CD4-positive, alpha-beta T cell (primary cell): ENCODE measurements at regions of chr1 and their contacts with region 1.

Region 1: GRCh38 chr1:222634180-222635013 is 16.5 kb downstream of the MIA3 start:
- DNase-seq: peak in 12 of 14 experiments; percentile 21 to 89 (median 60)
- ATAC-seq: peak; percentile 98
- H3K4me3 ChIP-seq: no peak overlapping the region
- H3K4me3 Mint-ChIP-seq: no peak overlapping the region
- H3K27ac ChIP-seq: no peak overlapping the region
- H3K27ac Mint-ChIP-seq: peak overlapping the region; percentile 1
- H3K4me1 ChIP-seq: no peaks in the 10 kb centered on the region
- H3K4me1 Mint-ChIP-seq: peaks cover 11% of the 10 kb centered on the region
- H3K27me3 ChIP-seq: no peaks in the 10 kb centered on the region
- H3K27me3 Mint-ChIP-seq: no peaks in the 10 kb centered on the region
- CTCF ChIP-seq: peak; percentile 92

Region 2: GRCh38 chr1:222095606-222096475 is 538.6 kb before region 1 on chr1:
- CTCF ChIA-PET with region 1: no interaction called
- POLR2A ChIA-PET with region 1: no interaction called
- intact Hi-C with region 1: loop called in 1 of 2 experiments (anchors 5 kb)
- DNase-seq: peak; percentile 36 to 79 (median 56)
- ATAC-seq: peak; percentile 65
- H3K4me3 ChIP-seq: no peak overlapping the region
- H3K4me3 Mint-ChIP-seq: no peak overlapping the region
- H3K27ac ChIP-seq: no peak overlapping the region
- H3K27ac Mint-ChIP-seq: no peak overlapping the region
- H3K4me1 ChIP-seq: peaks cover 3% of the 10 kb centered on the region
- H3K4me1 Mint-ChIP-seq: no peaks in the 10 kb centered on the region
- H3K27me3 ChIP-seq: no peaks in the 10 kb centered on the region
- H3K27me3 Mint-ChIP-seq: no peaks in the 10 kb centered on the region
- CTCF ChIP-seq: peak; percentile 86

Region 3: GRCh38 chr1:222465211-222466041 is 169.0 kb before region 1 on chr1:
- CTCF ChIA-PET with region 1: interaction called, 9 read pairs
- POLR2A ChIA-PET with region 1: interaction called, 11 read pairs
- intact Hi-C with region 1: loop called (anchors 1 kb)
- DNase-seq: peak; percentile 49 to 89 (median 72)
- ATAC-seq: peak; percentile 91
- H3K4me3 ChIP-seq: peak overlapping the region; percentile 69
- H3K4me3 Mint-ChIP-seq: peak overlapping the region; percentile 94
- H3K27ac ChIP-seq: peak overlapping the region; percentile 25 to 34
- H3K27ac Mint-ChIP-seq: peak overlapping the region; percentile 93
- H3K4me1 ChIP-seq: peaks cover 10% of the 10 kb centered on the region
- H3K4me1 Mint-ChIP-seq: peaks cover 19% of the 10 kb centered on the region
- H3K27me3 ChIP-seq: no peaks in the 10 kb centered on the region
- H3K27me3 Mint-ChIP-seq: peaks cover 5% of the 10 kb centered on the region
- CTCF ChIP-seq: peak; percentile 100

Region 4: GRCh38 chr1:222589462-222590302 is 44.7 kb before region 1 on chr1 and contains the start of gene TAF1A:
- CTCF ChIA-PET with region 1: interaction called, 9 read pairs
- POLR2A ChIA-PET with region 1: interaction called, 9 read pairs
- intact Hi-C with region 1: loop called in 1 of 2 experiments (anchors 5 kb)
- DNase-seq: peak; percentile 74 to 93 (median 82)
- ATAC-seq: peak; percentile 99
- H3K4me3 ChIP-seq: peak within 1 kb of the TSS; percentile 74
- H3K4me3 Mint-ChIP-seq: peak within 1 kb of the TSS; percentile 97
- H3K27ac ChIP-seq: peak within 1 kb of the TSS; percentile 67 to 76
- H3K27ac Mint-ChIP-seq: peak within 1 kb of the TSS; percentile 99
- H3K4me1 ChIP-seq: peaks cover 14% of the 10 kb centered on the region
- H3K4me1 Mint-ChIP-seq: peaks cover 55% of the 10 kb centered on the region
- H3K27me3 ChIP-seq: no peaks in the 10 kb centered on the region
- H3K27me3 Mint-ChIP-seq: no peaks in the 10 kb centered on the region
- CTCF ChIP-seq: no peak
- total RNA-seq, gene TAF1A: 3.3 to 4.1 TPM

Region 5: GRCh38 chr1:222617367-222617951 is 16.9 kb before region 1 on chr1:
- CTCF ChIA-PET with region 1: interaction called, 10 read pairs
- POLR2A ChIA-PET with region 1: interaction called, 5 read pairs
- intact Hi-C with region 1: loop called in 1 of 2 experiments (anchors 2 kb)
- DNase-seq: peak; percentile 85 to 99 (median 90)
- ATAC-seq: peak; percentile 90
- H3K4me3 ChIP-seq: peak overlapping the region; percentile 69
- H3K4me3 Mint-ChIP-seq: peak overlapping the region; percentile 94
- H3K27ac ChIP-seq: peak overlapping the region; percentile 43 to 80
- H3K27ac Mint-ChIP-seq: peak overlapping the region; percentile 92
- H3K4me1 ChIP-seq: peaks cover 18% of the 10 kb centered on the region
- H3K4me1 Mint-ChIP-seq: peaks cover 40% of the 10 kb centered on the region
- H3K27me3 ChIP-seq: peaks cover 0 to 6% of the 10 kb centered on the region in 2 experiments
- H3K27me3 Mint-ChIP-seq: peaks cover 34% of the 10 kb centered on the region
- CTCF ChIP-seq: no peak

Region 6: DNA sequence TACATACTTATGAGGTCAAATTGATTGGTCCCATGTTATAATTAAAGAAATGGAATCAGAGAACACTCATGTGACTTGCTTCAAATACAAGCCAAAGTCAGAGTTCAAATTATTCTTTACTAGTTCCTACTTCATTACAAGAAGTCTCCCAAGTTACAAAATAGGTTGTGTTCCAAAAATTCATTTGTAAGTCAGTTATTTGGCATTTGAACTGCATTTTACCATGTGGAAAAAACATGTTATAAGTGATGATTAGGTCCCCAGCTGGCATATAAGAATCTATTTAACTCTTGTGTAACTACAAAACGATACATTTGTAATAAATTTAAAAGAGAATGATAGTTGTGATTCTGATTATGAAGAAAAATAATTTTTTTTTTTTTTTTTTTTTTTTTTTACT is 304.6 kb after region 1 on chr1:
- CTCF ChIA-PET with region 1: no interaction called
- POLR2A ChIA-PET with region 1: no interaction called
- intact Hi-C with region 1: no loop called
- DNase-seq: no peak
- ATAC-seq: no peak
- H3K4me3 ChIP-seq: no peak overlapping the region
- H3K4me3 Mint-ChIP-seq: no peak overlapping the region
- H3K27ac ChIP-seq: no peak overlapping the region
- H3K27ac Mint-ChIP-seq: no peak overlapping the region
- H3K4me1 ChIP-seq: no peaks in the 10 kb centered on the region
- H3K4me1 Mint-ChIP-seq: no peaks in the 10 kb centered on the region
- H3K27me3 ChIP-seq: no peaks in the 10 kb centered on the region
- H3K27me3 Mint-ChIP-seq: no peaks in the 10 kb centered on the region
- CTCF ChIP-seq: no peak